Motor neuron (in vitro differentiated cells): ENCODE measurements at regions of chr1 and their contacts with region 1.

Region 1: DNA sequence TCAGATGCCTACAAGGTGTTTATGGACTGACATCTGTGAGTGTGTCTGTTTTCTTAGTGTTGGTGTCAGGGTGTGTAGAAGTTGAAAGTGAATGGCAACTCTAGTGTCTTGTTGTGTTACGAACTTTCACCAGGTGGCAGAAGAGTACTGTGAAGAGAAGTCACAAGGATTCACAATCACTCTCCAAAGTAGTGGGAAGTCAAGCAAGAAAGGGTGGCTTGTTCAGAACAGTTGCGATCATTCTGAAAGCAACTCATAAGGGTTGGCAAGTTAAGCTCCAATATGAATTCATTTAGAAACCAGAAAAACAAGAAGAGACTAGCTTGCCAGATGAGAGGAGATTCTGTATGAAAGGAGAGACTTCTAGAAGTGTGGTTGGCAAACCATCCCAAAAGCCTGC is 86.1 kb downstream of the FASLG start:
- ATAC-seq: peak; percentile 38 to 85 (median 57)
- H3K4me3 ChIP-seq: no peak overlapping the region
- H3K27ac ChIP-seq: no peak overlapping the region
- H3K4me1 ChIP-seq: no peaks in the 10 kb centered on the region

Region 2: GRCh38 chr1:172670791-172671190 is 74.2 kb before region 1 on chr1:
- in situ Hi-C with region 1: no loop called
- ATAC-seq: no peak
- H3K4me3 ChIP-seq: no peak overlapping the region
- H3K27ac ChIP-seq: no peak overlapping the region
- H3K4me1 ChIP-seq: no peaks in the 10 kb centered on the region

Region 3: DNA sequence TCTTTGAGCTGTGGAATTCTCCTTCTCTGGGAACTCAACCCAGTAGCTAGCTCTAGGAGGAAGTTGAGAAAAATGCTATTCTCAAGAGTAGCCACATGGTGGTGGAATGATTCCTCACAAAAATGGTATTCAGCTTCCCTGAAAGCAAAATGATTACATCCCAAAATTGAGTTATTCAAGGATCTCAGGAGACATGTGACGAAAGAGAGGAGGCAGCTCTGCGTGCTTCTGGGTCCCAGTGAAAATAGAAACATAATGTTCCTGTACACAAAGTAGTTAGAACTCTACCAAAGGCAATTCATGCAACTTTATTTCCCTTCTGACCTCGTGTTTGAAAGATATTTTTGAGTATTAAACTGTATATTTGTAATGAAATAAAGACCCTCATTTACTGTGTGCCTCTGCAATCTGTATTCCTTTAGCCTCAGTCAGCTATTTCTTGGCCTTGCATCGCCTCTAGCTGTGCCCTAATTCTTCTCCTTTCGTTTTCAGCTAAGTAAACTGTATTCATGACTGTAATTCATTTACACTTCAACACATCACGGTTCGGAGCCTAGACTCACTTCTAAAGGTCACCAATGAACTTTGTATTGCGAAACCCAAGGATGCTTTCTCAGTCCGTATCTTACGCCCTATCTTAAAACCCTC is 81.2 kb after region 1 on chr1:
- in situ Hi-C with region 1: loop called in 1 of 9 experiments (anchors 10 kb)
- ATAC-seq: peak in 7 of 8 experiments; percentile 44 to 90 (median 74)
- H3K4me3 ChIP-seq: no peak overlapping the region
- H3K27ac ChIP-seq: no peak overlapping the region
- H3K4me1 ChIP-seq: peaks cover 3% of the 10 kb centered on the region in 2 donors

Region 4: GRCh38 chr1:173122958-173123852 is 378.2 kb after region 1 on chr1:
- in situ Hi-C with region 1: no loop called
- ATAC-seq: peak; percentile 67 to 98 (median 96)
- H3K4me3 ChIP-seq: no peak overlapping the region
- H3K27ac ChIP-seq: peak overlapping the region; percentile 8 to 11
- H3K4me1 ChIP-seq: peaks cover 12 to 13% of the 10 kb centered on the region in 2 donors

Region 5: GRCh38 chr1:173202430-173203145 is 457.6 kb after region 1 on chr1:
- in situ Hi-C with region 1: loop called in 3 of 9 experiments (anchors 10 to 25 kb)
- ATAC-seq: peak in 4 of 8 experiments; percentile 47 to 82 (median 80)
- H3K4me3 ChIP-seq: no peak overlapping the region
- H3K27ac ChIP-seq: no peak overlapping the region
- H3K4me1 ChIP-seq: no peaks in the 10 kb centered on the region

Region 6: GRCh38 chr1:173420330-173420806 is 675.4 kb after region 1 on chr1:
- in situ Hi-C with region 1: loop called in 1 of 9 experiments (anchors 25 kb)
- ATAC-seq: peak; percentile 21 to 99 (median 57)
- H3K4me3 ChIP-seq: no peak overlapping the region
- H3K27ac ChIP-seq: no peak overlapping the region
- H3K4me1 ChIP-seq: no peaks in the 10 kb centered on the region

Region 7: DNA sequence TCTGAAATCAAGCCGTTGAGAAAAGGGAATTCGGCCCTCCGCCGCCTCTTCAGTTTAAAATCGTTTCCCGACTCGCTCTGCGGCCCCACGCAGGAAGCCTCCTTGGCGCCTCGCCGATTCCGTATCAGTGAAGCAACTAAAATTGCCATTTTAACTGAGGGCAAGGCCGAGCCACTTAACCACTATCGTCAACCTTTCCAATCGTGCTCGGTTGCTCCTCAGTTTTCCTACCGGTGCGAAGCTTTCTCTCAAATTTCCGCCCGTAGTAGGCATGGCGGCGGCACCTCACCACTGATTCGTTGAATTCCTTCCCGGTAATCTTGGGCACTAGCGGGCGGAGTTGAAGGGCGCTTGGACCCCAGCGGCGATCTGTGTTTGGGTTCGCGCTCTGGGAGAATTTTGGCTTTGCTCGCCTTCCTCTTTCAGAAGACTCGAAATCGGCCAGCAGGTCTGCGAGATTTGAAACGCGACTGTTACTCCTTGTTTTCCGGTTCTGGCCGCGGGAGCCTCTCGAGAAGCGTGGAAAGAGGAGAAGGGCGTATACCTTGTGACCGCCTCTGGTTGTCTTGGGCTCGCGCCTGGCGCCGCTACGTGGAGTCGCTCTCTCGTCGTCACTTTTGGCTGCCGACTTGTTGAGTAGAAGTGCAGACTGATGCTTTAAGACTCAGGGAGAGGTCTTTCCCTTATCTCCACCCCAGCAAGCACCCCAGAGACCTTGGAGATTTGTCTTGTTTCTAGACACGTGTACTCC is 1079.5 kb after region 1 on chr1 and contains the starts of genes CENPL and DARS2:
- in situ Hi-C with region 1: loop called in 2 of 9 experiments (anchors 25 kb)
- ATAC-seq: peak; percentile 89 to 94 (median 92)
- H3K4me3 ChIP-seq: peak within 1 kb of the TSS; percentile 66 to 86 (median 71)
- H3K27ac ChIP-seq: peak within 1 kb of the TSS; percentile 80 to 88
- H3K4me1 ChIP-seq: peaks cover 15 to 18% of the 10 kb centered on the region in 2 donors
- total RNA-seq, gene CENPL: 3.2 to 17.4 (median 6.7) TPM
- total RNA-seq, gene DARS2: 12.7 to 34.6 (median 16.5) TPM

Region 8: GRCh38 chr1:174743654-174744561 is 1998.9 kb after region 1 on chr1:
- in situ Hi-C with region 1: loop called in 1 of 9 experiments (anchors 25 kb)
- ATAC-seq: peak in 2 of 8 experiments; percentile 14 to 54
- H3K4me3 ChIP-seq: no peak overlapping the region
- H3K27ac ChIP-seq: no peak overlapping the region
- H3K4me1 ChIP-seq: no peaks in the 10 kb centered on the region